ENCODE measurements at regions of chr5 and their contacts with region 1.

Region 1: DNA sequence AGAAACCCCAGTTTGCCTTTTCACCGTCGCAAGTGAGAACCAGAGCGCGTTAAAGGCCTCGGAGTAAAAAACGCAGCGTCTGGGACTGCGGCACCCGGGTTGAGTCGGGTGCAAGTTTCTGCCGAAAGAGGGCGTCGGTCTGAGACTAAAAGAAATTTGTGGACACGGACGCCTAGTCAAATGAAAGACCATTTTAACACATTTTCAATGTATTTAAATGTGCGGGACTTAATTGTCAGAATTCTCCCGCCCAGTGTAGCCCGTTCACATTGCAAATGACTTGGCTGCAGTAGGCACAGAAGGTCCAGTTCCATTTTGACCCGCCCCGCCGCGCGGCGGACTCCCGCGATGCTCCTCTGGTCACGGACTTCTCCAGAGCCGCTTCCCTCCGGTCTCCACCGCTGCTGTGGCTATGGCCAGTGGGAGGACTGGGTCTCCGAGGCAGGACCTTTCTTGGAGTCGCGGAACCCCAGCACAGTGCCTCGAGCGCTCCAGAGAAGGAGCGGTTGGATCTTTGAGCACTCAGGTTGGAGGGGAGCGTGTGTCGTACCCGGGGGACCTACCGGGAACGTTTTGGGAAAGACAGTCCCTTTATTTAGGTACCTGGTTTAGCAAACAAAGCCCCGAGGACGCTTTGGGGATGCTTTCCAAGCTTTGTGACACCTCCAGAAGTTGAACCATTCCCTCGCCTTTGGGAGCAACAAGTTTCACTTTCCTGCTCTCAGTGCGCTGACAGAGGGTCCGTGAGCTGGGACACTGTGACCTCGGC is 1.2 kb upstream of the NPR3 start:
- DNase-seq: peak; percentile 69
- H3K4me3 ChIP-seq: peak overlapping the region; percentile 79
- H3K27ac ChIP-seq: peak overlapping the region; percentile 92
- H3K4me1 ChIP-seq: peaks cover 51% of the 10 kb centered on the region
- H3K27me3 ChIP-seq: peaks cover 30% of the 10 kb centered on the region
- CTCF ChIP-seq: peak; percentile 78

Region 2: GRCh38 chr5:33180900-33181299 is 470.9 kb after region 1 on chr5:
- intact Hi-C with region 1: loop called (anchors 5 kb)
- DNase-seq: no peak
- H3K4me3 ChIP-seq: no peak overlapping the region
- H3K27ac ChIP-seq: no peak overlapping the region
- H3K4me1 ChIP-seq: no peaks in the 10 kb centered on the region
- H3K27me3 ChIP-seq: no peaks in the 10 kb centered on the region
- CTCF ChIP-seq: peak; percentile 56